CD4-positive, alpha-beta memory T cell (primary cell): ENCODE measurements at regions of chr15 and their contacts with region 1.

Region 1: GRCh38 chr15:85296615-85297402 is 83.6 kb upstream of the AKAP13 start:
- DNase-seq: peak; percentile 67 to 75 (median 72)
- H3K4me3 ChIP-seq: peak overlapping the region in 1 of 2 donors; percentile 20
- H3K4me3 Mint-ChIP-seq: peak overlapping the region in 7 of 8 donors; percentile 1 to 70 (median 65)
- H3K27ac ChIP-seq: no peak overlapping the region
- H3K27ac Mint-ChIP-seq: peak overlapping the region in 4 of 7 donors; percentile 24 to 73 (median 27)
- H3K4me1 ChIP-seq: peaks cover 6% of the 10 kb centered on the region
- H3K4me1 Mint-ChIP-seq: peaks cover 8 to 15% (median 10%) of the 10 kb centered on the region in 4 donors
- H3K27me3 ChIP-seq: no peaks in the 10 kb centered on the region
- H3K27me3 Mint-ChIP-seq: peaks cover 0 to under 1% of the 10 kb centered on the region in 2 donors

Region 2: GRCh38 chr15:84826369-84826823 is 470.4 kb before region 1 on chr15:
- CTCF ChIA-PET with region 1: no interaction called
- POLR2A ChIA-PET with region 1: no interaction called
- intact Hi-C with region 1: no loop called
- DNase-seq: no peak
- H3K4me3 ChIP-seq: no peak overlapping the region
- H3K4me3 Mint-ChIP-seq: no peak overlapping the region
- H3K27ac ChIP-seq: no peak overlapping the region
- H3K27ac Mint-ChIP-seq: no peak overlapping the region
- H3K4me1 ChIP-seq: no peaks in the 10 kb centered on the region
- H3K4me1 Mint-ChIP-seq: no peaks in the 10 kb centered on the region
- H3K27me3 ChIP-seq: no peaks in the 10 kb centered on the region
- H3K27me3 Mint-ChIP-seq: no peaks in the 10 kb centered on the region

Region 3: GRCh38 chr15:85318048-85318731 is 21.4 kb after region 1 on chr15:
- CTCF ChIA-PET with region 1: interaction called, 12 read pairs
- POLR2A ChIA-PET with region 1: interaction called, 3 read pairs
- intact Hi-C with region 1: no loop called
- DNase-seq: peak in 3 of 5 donors; percentile 10 to 49 (median 29)
- H3K4me3 ChIP-seq: no peak overlapping the region
- H3K4me3 Mint-ChIP-seq: peak overlapping the region in 4 of 8 donors; percentile 35 to 62 (median 51)
- H3K27ac ChIP-seq: no peak overlapping the region
- H3K27ac Mint-ChIP-seq: peak overlapping the region in 6 of 7 donors; percentile 79 to 90 (median 82)
- H3K4me1 ChIP-seq: peaks cover 42% of the 10 kb centered on the region
- H3K4me1 Mint-ChIP-seq: peaks cover 32 to 47% (median 38%) of the 10 kb centered on the region in 4 donors
- H3K27me3 ChIP-seq: no peaks in the 10 kb centered on the region
- H3K27me3 Mint-ChIP-seq: no peaks in the 10 kb centered on the region

Region 4: DNA sequence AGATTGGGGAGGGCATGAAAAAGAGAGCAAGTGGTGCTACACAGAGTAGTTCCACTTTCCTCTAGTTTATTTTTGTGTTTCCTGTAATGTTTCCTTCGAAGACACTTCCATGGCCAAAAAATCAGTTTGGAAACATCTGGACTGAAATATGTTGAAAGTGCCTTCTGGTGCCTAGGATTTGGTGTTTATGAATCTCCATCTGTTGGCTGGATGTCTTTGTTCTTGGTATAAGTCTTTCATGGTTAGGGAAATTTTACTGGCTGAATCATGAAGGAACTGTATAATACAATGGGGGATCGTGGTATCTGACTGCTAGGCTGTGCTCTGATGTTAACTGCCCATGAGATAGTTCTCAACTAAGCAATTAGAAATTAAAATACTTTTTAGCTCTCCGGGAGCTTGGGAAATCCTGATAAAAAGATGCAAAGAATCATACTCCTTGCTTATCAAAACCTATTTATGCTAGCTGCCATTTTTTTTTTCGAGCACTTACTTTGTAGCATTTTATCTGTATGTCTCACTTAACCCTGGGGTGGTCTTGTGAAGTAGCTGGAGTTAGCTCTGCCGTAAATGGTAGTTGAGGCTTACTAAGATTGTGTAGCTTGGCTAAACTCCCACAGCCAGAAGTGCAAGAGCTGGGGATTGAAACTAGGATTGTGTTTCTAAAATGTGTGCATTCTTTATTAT is 105.5 kb after region 1 on chr15:
- CTCF ChIA-PET with region 1: interaction called, 12 read pairs
- POLR2A ChIA-PET with region 1: no interaction called
- intact Hi-C with region 1: no loop called
- DNase-seq: no peak
- H3K4me3 ChIP-seq: no peak overlapping the region
- H3K4me3 Mint-ChIP-seq: peak overlapping the region in 4 of 8 donors; percentile 0 to 49 (median 16)
- H3K27ac ChIP-seq: no peak overlapping the region
- H3K27ac Mint-ChIP-seq: peak overlapping the region; percentile 7 to 72 (median 28)
- H3K4me1 ChIP-seq: peaks cover 47% of the 10 kb centered on the region
- H3K4me1 Mint-ChIP-seq: peaks cover 53 to 90% (median 73%) of the 10 kb centered on the region in 4 donors
- H3K27me3 ChIP-seq: no peaks in the 10 kb centered on the region
- H3K27me3 Mint-ChIP-seq: no peaks in the 10 kb centered on the region

Region 5: DNA sequence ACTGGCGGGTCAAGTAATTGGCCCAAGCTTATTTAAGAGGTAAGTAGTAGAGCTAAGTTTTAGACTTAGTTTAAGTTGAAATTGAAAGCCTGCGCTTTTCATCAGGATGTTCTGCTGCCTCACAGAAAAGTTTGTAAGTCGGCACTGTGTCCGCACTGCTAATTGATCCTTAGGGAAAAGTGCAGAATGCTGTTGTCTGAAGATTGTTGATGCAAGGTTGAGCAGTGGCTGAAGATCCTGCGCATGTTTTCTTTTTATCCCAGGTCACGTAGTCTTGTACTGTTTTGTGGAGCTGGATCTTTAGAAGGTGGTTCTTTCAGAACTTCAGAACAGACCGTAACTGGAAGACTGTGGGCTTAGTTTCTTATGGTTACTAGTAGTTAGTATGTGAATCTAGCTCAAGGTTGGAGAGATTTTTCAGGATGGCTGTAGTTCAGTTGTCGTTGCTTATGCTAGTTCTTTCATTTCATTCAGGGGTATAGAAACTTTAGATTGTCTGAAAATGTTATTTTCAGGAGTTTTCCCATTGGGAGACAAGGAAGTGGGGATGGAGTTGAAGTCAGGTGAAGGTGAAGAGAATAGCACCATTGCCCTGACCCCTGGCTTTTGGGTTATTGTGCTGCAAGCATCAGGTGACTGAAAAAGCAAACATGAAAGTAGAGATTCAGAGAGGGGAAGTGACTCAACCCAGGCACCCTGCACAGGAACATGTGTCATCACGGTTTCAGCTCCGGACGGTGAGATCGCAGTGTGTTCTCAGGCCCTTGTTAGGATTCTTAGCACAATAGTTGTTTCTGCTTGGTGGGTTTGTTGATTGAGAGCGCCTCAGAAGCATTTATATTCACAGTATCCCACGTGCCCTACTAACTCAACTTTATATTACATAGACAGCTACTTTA is 116.4 kb after region 1 on chr15:
- CTCF ChIA-PET with region 1: interaction called, 113 read pairs
- POLR2A ChIA-PET with region 1: interaction called, 19 read pairs
- intact Hi-C with region 1: loop called (anchors 1 kb)
- DNase-seq: peak; percentile 45 to 86 (median 54)
- H3K4me3 ChIP-seq: no peak overlapping the region
- H3K4me3 Mint-ChIP-seq: peak overlapping the region in 7 of 8 donors; percentile 47 to 87 (median 65)
- H3K27ac ChIP-seq: peak overlapping the region; percentile 40
- H3K27ac Mint-ChIP-seq: peak overlapping the region; percentile 78 to 96 (median 92)
- H3K4me1 ChIP-seq: peaks cover 32% of the 10 kb centered on the region
- H3K4me1 Mint-ChIP-seq: peaks cover 50 to 75% (median 58%) of the 10 kb centered on the region in 4 donors
- H3K27me3 ChIP-seq: no peaks in the 10 kb centered on the region
- H3K27me3 Mint-ChIP-seq: no peaks in the 10 kb centered on the region

Region 6: DNA sequence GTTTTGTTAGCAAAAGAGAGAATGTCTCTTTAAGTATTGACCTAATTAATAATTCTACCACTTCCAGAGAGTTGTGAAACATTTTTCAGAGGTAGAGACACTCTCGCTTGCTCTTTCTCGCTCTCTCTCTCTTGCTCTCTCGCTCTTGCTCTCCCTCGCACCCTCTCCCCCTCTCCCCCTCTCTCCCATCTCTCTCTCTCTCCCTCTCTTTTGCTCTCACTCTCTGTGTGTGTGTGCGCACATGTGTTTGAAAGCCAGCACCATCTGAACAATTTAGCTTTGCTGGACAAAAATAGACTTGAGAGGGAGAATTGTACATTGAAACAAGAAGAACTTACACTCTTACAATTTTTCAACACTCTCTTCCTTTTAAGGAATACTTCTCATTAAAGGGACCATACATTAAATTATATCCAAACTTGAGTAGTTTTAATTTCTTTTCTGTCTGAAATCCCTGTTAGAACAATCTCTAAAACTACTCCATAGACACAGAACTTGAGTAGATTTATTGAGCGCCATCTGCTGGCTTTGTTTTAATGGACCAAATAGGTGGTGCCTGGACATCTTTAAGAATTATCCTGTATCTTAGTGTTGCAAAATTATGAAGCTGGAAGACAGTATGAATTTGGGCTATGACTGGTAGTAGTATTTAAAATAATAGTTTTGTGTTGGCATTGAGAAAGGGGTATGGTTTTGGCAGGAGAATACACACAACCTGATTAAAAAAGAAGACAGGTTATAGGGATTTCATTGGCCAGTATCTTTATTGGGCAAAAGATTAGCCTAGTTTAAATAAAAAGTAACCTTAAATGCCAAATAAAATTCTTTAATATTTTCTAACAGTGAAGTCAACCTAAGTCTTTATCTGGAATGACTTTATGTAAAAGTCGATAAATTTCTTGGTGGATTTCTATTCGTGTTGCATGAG is 208.2 kb after region 1 on chr15:
- CTCF ChIA-PET with region 1: interaction called, 66 read pairs
- POLR2A ChIA-PET with region 1: interaction called, 5 read pairs
- intact Hi-C with region 1: loop called (anchors 1 kb)
- DNase-seq: peak; percentile 37 to 55 (median 42)
- H3K4me3 ChIP-seq: no peak overlapping the region
- H3K4me3 Mint-ChIP-seq: no peak overlapping the region
- H3K27ac ChIP-seq: no peak overlapping the region
- H3K27ac Mint-ChIP-seq: peak overlapping the region in 4 of 7 donors; percentile 9 to 75 (median 34)
- H3K4me1 ChIP-seq: peaks cover 48% of the 10 kb centered on the region
- H3K4me1 Mint-ChIP-seq: peaks cover 56 to 65% (median 60%) of the 10 kb centered on the region in 4 donors
- H3K27me3 ChIP-seq: no peaks in the 10 kb centered on the region
- H3K27me3 Mint-ChIP-seq: no peaks in the 10 kb centered on the region